Activated CD4-positive, alpha-beta memory T cell treated with anti-CD3 and anti-CD28 coated beads for 36 hours (primary cell): ENCODE measurements at regions of chr11 and their contacts with region 1.

Region 1: GRCh38 chr11:66222358-66223149 is 45.9 kb upstream of the RAB1B start:
- DNase-seq: peak; percentile 97
- H3K4me3 Mint-ChIP-seq: peak overlapping the region; percentile 47
- H3K27ac Mint-ChIP-seq: peak overlapping the region; percentile 100
- H3K4me1 Mint-ChIP-seq: peaks cover 21% of the 10 kb centered on the region
- H3K27me3 Mint-ChIP-seq: no peaks in the 10 kb centered on the region

Region 2: GRCh38 chr11:66282468-66283386 is 60.2 kb after region 1 on chr11:
- CTCF ChIA-PET with region 1: interaction called, 19 read pairs
- POLR2A ChIA-PET with region 1: interaction called, 4 read pairs
- intact Hi-C with region 1: loop called (anchors 1 kb)
- DNase-seq: peak; percentile 98
- H3K4me3 Mint-ChIP-seq: peak overlapping the region; percentile 57
- H3K27ac Mint-ChIP-seq: peak overlapping the region; percentile 56
- H3K4me1 Mint-ChIP-seq: peaks cover 30% of the 10 kb centered on the region
- H3K27me3 Mint-ChIP-seq: no peaks in the 10 kb centered on the region